PC-9 (cell line): ENCODE measurements at regions of chr6 and their contacts with region 1.

Region 1: GRCh38 chr6:82072751-82073150 is 174.8 kb downstream of the IBTK start:
- DNase-seq: no peak
- H3K4me3 ChIP-seq: no peak overlapping the region
- H3K27ac ChIP-seq: no peak overlapping the region
- H3K4me1 ChIP-seq: no peaks in the 10 kb centered on the region
- H3K27me3 ChIP-seq: no peaks in the 10 kb centered on the region
- CTCF ChIP-seq: no peak

Region 2: GRCh38 chr6:81761197-81761596 is 311.6 kb before region 1 on chr6:
- CTCF ChIA-PET with region 1: no interaction called
- POLR2A ChIA-PET with region 1: interaction called, 43 read pairs
- intact Hi-C with region 1: no loop called
- DNase-seq: no peak
- H3K4me3 ChIP-seq: no peak overlapping the region
- H3K27ac ChIP-seq: no peak overlapping the region
- H3K4me1 ChIP-seq: peaks cover 6% of the 10 kb centered on the region
- H3K27me3 ChIP-seq: no peaks in the 10 kb centered on the region
- CTCF ChIP-seq: no peak

Region 3: GRCh38 chr6:82138075-82138791 is 65.5 kb after region 1 on chr6:
- CTCF ChIA-PET with region 1: no interaction called
- POLR2A ChIA-PET with region 1: interaction called, 11 read pairs
- intact Hi-C with region 1: no loop called
- DNase-seq: no peak
- H3K4me3 ChIP-seq: no peak overlapping the region
- H3K27ac ChIP-seq: no peak overlapping the region
- H3K4me1 ChIP-seq: no peaks in the 10 kb centered on the region
- H3K27me3 ChIP-seq: no peaks in the 10 kb centered on the region
- CTCF ChIP-seq: no peak